AG04449 (cell line): ENCODE measurements at regions of chr10 and their contacts with region 1.

Region 1: GRCh38 chr10:103192451-103193106 is 493 bp downstream of the NT5C2 start:
- DNase-seq: no peak
- H3K4me3 ChIP-seq: peak overlapping the region; percentile 77
- CTCF ChIP-seq: no peak

Region 2: GRCh38 chr10:102540023-102540422 is 652.6 kb before region 1 on chr10:
- CTCF ChIA-PET with region 1: no interaction called
- POLR2A ChIA-PET with region 1: no interaction called
- DNase-seq: no peak
- H3K4me3 ChIP-seq: no peak overlapping the region
- CTCF ChIP-seq: peak; percentile 29

Region 3: GRCh38 chr10:103231047-103231551 is 38.5 kb after region 1 on chr10:
- CTCF ChIA-PET with region 1: interaction called, 7 read pairs
- POLR2A ChIA-PET with region 1: interaction called, 30 read pairs
- DNase-seq: peak; percentile 87
- H3K4me3 ChIP-seq: no peak overlapping the region
- CTCF ChIP-seq: no peak